ENCODE measurements at regions of chr7 and their contacts with region 1.

Region 1: DNA sequence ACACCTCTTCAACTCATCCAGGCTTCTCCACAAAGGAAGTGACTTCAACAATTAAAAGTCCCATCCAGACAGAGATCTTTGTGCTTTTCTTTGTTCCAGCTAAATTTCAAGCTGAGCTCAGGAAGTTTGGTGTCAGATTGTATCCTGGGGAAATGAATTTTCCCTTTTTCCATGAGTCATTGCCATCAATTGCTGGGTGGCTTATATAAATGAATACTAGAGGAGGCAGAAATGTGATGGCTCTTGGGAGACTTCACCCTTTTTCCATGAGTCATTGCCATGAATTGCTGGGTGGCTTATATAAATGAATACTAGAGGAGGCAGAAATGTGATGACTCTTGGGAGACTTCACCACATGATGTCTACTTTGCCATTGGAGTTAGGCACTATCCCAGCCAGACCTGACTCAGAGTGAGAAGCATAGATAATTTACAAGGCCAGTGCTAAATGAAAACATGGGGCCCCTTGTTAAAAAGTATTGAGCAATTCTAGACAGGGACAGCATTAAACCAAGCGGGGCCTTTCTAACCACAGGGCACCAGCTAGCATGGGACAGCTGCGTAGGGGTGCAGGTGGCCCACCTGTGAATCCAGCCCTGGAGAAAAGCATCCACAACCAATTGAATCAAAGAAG is 339.2 kb upstream of the PODXL start:
- DNase-seq: peak; percentile 95
- ATAC-seq: peak; percentile 86
- H3K4me3 ChIP-seq: no peak overlapping the region; the same call in 1 of the 2 replicates
- H3K27ac ChIP-seq: peak overlapping the region; percentile 98
- H3K4me1 ChIP-seq: peaks cover 28% of the 10 kb centered on the region
- H3K27me3 ChIP-seq: no peaks in the 10 kb centered on the region
- CTCF ChIP-seq: no peak

Region 2: DNA sequence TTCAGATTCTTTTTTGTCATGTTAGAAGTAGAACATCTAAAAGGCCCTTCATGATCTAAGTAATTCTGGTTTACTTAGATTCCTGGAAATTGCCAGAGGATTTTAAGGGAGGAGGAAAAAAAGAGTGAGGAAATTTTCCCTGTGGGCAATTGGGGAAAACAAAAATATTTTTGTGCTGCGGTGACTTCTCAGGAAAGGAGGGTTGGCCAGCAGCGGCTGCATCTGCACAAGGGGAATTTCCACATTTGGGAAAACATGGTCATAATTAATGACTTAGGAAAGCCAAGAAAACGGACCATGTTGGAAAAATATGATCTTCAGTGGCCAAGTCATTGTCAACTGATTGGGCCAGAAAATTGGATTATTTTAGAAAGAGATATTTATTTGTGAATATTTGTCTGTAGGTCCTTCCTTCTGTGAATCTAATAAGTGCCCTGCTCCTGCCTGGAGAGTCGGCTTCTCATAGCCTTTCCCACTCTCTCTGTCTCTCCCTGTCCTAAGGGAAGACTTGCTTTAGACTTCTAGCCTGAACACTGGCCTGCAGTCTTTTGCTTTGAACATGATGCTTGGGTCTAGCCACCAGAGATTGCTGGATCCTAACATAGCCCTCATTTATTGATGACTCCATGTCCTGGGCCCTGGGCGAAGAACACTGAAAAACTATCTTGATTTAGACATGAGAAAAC is 692.2 kb before region 1 on chr7:
- CTCF ChIA-PET with region 1: no interaction called
- POLR2A ChIA-PET with region 1: no interaction called
- intact Hi-C with region 1: no loop called
- DNase-seq: no peak
- ATAC-seq: no peak
- H3K4me3 ChIP-seq: no peak overlapping the region
- H3K27ac ChIP-seq: no peak overlapping the region
- H3K4me1 ChIP-seq: peaks cover 1% of the 10 kb centered on the region
- H3K27me3 ChIP-seq: no peaks in the 10 kb centered on the region
- CTCF ChIP-seq: no peak

Region 3: GRCh38 chr7:132270517-132270916 is 374.9 kb after region 1 on chr7:
- CTCF ChIA-PET with region 1: interaction called, 11 read pairs
- POLR2A ChIA-PET with region 1: no interaction called
- intact Hi-C with region 1: no loop called
- DNase-seq: peak; percentile 47
- ATAC-seq: no peak
- H3K4me3 ChIP-seq: no peak overlapping the region
- H3K27ac ChIP-seq: no peak overlapping the region
- H3K4me1 ChIP-seq: no peaks in the 10 kb centered on the region; the same call in 1 of the 2 replicates
- H3K27me3 ChIP-seq: 0 out of 2 replicates have a peak, but pooled peaks cover 6% of the 10 kb centered on the region
- CTCF ChIP-seq: no peak